K562 (cell line): ENCODE measurements at regions of chr5 and their contacts with region 1.

Region 1: DNA sequence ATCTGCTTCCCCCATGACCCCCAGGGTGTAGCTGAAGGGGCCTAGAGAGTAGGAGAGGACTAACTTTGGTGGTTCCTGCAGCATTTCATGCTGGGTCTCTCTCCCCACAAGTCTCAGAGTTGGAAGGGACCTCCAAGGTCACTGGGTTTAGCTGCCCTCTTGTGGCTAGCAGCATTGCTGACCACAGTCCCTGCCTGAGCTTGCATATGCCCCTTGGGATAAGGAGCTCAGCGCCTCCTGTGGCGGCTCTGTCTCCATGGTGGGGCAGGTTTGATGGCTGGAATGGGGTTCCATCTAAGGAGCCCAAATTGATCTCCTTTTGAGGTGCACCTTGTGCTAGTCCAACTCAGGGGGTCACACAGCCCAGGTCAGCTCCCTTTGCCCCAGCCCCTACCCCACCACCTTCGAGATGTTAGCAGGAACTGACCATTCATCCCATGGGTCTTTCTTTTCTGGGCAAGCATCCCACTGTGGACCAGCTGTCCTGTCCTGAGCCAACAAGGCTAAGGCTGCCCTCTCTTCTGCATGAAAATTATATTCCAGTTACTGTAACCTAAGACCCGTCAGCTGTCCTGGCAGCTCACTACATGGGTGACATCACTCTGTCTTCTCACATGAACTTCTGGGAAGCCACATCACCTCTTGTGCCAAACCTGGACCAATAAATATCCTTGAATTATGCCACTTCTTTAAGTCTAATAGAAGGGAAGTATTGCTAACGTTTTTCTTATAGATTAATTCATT is 196.2 kb downstream of the HSPA4 start:
- DNase-seq: peak; percentile 75 to 90 (median 80)
- ATAC-seq: peak; percentile 97
- H3K4me3 ChIP-seq: no peak overlapping the region
- H3K27ac ChIP-seq: no peak overlapping the region; the same call in 2 of the 3 replicates
- H3K4me1 ChIP-seq: peaks cover 26 to 44% of the 10 kb centered on the region in 2 experiments
- H3K27me3 ChIP-seq: peaks cover 16 to 24% of the 10 kb centered on the region in 2 experiments; a peak in 4 of 5 replicates
- CTCF ChIP-seq: peak; percentile 99
- EP300 ChIP-seq: no peak; the same call in 1 of the 2 replicates
- POLR2A ChIP-seq: no peak
- RAD21 ChIP-seq: peak; percentile 96 to 98

Region 2: DNA sequence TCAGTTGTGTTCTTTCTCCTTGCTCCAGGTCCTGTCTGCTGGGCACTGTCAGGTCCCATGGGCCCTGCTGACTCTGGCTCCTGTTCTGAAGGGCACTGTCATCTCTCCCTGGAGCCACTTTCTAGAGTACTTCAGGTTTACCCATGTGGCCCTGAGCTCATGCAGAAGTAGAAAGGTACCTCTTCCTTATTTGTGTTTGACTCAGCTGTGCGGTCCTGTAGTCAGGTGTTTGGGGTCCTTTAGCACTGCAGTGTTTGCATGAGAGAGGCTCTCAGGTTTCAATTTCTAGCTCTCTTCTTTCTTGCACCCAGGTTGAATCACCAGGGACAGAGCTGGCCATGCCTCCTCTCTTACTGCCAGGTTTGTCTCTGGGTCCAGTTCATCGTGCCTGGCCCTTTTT is 124.8 kb before region 1 on chr5:
- CTCF ChIA-PET with region 1: no interaction called
- POLR2A ChIA-PET with region 1: no interaction called
- in situ Hi-C with region 1: loop called (anchors 5 kb)
- intact Hi-C with region 1: no loop called
- DNase-seq: no peak
- ATAC-seq: no peak
- H3K4me3 ChIP-seq: no peak overlapping the region
- H3K27ac ChIP-seq: no peak overlapping the region
- H3K4me1 ChIP-seq: 0 out of 5 replicates have a peak, but pooled peaks cover 0 to 3% of the 10 kb centered on the region in 2 experiments
- H3K27me3 ChIP-seq: peaks cover 18 to 65% of the 10 kb centered on the region in 2 experiments; a peak in 3 of 5 replicates
- CTCF ChIP-seq: no peak
- EP300 ChIP-seq: no peak
- POLR2A ChIP-seq: no peak
- RAD21 ChIP-seq: no peak